Left cardiac atrium (tissue), 4 donors: ENCODE measurements at regions of chr3 and their contacts with region 1.

Region 1: DNA sequence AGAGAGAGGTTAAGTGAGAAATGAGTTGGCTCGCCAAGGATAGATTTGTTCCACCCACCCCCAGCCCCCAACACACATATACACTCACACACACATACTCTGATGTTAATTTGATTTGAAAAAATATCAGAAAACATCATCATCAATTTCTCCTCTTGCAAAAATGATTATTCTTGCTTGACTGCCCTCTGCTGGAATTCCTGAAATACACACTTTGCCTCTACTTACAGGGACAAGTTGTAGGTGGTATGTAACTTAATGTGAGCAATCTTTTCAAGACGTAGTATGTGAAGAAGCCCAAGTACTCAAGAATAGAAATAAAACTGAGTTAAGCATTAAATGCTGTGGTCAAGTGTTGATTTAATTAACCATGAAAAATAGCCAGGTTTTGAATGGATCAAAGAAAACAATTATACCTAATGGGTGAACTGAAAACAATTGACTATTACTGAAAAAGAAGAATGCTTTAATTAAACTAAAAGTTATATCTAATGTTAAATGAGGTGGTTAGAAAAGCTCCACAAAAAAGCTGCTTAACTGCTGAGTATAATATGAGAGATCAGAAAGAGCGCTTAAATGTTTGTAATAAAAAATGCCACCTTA is 46.6 kb upstream of the MDFIC2 start:
- DNase-seq: no peak
- ATAC-seq: no peak

Region 2: DNA sequence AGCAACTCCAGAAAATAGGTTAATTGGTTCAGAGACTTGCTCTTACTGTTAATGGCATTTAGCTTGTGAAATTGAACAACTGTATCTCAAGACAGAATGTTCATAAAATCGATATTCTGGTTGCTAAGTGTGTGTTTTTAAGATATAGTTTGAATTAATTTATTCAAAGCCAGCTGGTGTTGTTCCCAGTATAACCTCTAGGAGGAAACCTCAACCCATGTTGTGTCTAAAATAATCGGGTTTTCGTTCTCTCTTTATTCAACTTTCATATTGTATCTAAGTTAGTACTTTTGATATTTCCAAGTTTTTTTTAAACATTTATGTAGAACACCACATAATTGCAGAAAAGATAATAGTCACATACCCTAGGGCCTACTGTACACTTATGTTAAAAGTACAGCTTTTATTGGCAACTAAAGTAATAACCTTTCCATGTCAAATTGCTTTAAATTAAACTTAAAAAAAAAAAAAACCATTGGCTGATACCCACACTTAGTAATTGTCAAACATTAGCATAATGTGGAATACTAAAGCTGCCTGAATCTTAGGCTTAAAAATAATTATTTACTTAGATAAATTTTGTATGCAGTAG is 268.7 kb before region 1 on chr3:
- intact Hi-C with region 1: loop called (anchors 5 to 10 kb)
- DNase-seq: no peak
- ATAC-seq: no peak

Region 3: DNA sequence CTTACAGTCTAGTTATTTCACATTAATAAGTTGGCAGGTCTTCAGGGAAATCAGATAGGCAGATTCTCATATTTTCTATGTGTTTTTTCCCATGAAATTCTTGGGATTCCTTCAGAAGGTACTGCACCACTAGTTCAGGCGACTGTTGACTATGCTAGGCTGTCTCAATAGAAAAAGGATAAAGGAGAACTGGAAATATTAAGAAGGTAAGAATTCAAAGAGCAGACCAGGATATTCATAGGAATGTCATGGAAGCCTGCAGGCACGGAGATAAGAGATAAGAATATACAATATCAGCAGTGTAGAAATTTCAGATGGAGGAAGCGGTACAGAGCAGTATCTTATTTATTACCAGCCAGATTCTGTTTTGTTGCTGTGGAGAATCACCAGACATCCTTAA is 385.5 kb after region 1 on chr3:
- intact Hi-C with region 1: no loop called
- DNase-seq: no peak
- ATAC-seq: no peak